AG04449 (cell line): ENCODE measurements at regions of chr19 and their contacts with region 1.

Region 1: DNA sequence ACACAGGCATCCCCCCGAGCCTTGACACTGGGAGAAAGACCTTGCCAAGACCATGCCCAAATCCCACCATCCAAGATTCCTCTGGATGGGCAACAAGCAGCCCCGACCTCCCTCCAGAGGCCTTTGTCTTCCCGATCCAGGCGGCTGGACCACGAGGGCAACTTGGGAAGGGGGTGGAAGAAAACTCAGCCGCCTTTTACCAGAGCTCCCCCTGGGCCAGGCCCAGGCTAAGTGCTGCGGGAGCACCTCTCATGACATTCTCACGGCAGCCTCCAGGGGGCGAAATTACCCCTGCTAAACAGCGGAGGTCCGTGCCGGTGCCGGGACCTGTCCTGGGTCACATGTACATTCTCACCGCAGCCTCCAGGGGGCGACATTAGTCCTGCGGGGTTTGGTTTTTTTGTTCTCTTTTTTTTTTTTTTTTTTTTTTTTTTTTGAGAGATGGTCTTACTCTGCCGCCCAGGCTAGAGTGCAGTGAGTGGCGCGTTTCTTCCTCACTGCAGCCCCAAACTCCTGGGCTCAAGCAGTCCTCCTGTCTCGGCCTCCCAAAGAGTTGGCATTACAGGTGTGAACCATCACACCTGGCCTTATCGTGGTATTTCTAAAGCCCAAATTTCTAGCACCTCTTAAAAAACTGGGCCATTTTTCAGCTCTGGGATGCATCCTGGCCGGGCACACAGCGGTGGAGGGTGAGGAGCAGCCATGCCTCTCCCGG is 2.1 kb upstream of the RSPH6A start:
- DNase-seq: peak; percentile 38
- H3K4me3 ChIP-seq: no peak overlapping the region
- CTCF ChIP-seq: peak; percentile 88

Region 2: DNA sequence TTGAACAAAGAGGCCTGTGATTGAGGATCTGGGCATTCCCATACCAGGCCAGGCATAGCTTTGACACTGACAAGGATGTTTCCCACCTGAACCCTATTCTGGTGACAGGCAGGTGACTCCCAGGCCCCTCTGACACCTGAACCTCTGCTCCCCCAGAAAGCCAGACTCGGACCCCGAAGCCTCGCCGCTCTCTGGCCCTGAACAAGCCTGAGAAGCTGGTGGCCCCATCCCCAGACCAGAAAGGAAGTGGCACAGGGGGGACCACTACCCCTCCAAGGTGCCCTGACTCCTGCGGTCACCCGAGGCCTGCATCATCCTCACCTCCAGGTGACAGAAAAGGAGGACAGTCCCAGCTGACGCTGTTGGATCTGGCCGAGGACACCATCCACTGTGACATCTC is 62.8 kb before region 1 on chr19:
- CTCF ChIA-PET with region 1: no interaction called
- POLR2A ChIA-PET with region 1: no interaction called
- DNase-seq: no peak
- H3K4me3 ChIP-seq: no peak overlapping the region
- CTCF ChIP-seq: no peak

Region 3: DNA sequence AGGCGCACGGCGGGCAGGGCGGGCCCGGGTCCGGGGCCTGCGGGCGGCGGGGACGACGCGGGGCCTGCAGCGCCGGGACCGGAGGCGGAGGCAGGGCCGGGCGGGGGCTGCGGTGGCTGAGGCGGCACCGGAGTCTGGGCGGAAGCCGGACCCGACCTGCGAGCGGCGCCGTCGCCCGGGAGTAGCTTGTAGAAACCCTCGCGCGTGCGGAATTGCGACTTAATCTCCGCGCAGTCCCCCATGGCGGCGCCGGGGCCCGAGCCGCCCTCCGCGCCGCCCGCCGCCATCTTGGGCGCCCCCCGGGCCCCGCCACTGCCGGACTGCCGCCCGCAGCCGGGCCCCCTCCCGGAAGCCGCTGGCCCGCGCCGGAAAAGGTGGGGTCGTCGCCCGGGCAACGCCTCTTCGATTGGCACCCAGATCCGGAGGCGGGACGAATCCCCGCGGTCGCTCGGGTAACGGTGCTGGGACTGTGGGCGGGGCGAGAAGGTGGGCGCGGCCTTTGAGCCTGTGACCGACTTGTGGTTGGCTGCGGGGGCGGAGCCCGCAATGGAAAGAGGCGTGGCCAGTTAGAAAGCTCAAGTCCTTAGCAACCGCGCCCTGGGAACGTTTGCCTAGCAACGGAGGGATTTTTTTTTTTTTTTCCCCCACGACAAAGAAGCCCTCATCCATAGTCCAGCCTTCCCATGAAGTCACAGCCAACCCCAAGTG is 24.5 kb before region 1 on chr19 and contains the start of gene DMWD:
- CTCF ChIA-PET with region 1: interaction called, 17 read pairs
- POLR2A ChIA-PET with region 1: no interaction called
- DNase-seq: peak; percentile 88
- H3K4me3 ChIP-seq: peak within 1 kb of the TSS; percentile 89
- CTCF ChIP-seq: no peak

Region 4: GRCh38 chr19:45798995-45799517 is 18.1 kb before region 1 on chr19:
- CTCF ChIA-PET with region 1: interaction called, 123 read pairs
- POLR2A ChIA-PET with region 1: no interaction called
- DNase-seq: peak; percentile 54
- H3K4me3 ChIP-seq: no peak overlapping the region
- CTCF ChIP-seq: peak; percentile 76

Region 5: DNA sequence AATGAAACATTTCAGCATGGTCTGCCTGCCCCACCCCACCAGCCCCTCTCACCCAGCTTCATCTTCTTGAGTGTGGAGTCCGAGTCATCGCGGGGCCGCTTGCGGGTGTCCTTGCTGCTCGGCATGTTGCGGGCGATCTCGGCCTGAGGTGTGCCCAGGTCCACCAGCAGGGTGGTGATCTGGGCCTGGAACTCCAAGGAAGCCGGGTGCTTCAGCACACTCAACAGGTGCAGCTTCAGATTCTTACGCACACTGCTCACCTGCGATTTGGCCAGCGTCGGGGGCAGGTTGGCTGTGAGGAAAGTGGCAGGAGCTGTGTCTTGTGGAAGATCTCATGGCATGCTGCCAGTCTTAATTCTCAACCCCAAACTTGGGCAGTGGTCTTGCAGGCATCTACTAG is 25.0 kb after region 1 on chr19:
- CTCF ChIA-PET with region 1: interaction called, 231 read pairs
- POLR2A ChIA-PET with region 1: no interaction called
- DNase-seq: no peak
- H3K4me3 ChIP-seq: no peak overlapping the region
- CTCF ChIP-seq: no peak

Region 6: DNA sequence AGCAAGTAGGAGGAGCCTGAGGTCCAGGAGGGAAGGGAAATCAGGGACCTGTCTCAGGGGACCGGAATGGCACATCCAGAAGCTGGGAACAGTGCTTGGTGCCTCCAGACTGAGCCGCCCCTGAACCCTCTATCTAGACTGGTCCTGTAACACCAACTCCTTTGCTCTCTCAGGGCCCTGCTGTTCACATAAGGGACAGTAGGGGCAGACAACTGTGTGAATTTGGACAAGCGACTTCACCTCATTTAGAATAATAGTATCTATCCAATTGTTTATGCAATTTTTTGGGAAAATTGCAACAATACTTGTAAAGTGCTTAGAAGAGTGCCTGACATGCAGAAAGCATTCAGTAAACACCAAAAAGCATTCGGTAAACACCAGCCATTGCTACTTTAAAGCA is 31.8 kb after region 1 on chr19:
- CTCF ChIA-PET with region 1: interaction called, 52 read pairs
- POLR2A ChIA-PET with region 1: no interaction called
- DNase-seq: no peak
- H3K4me3 ChIP-seq: no peak overlapping the region
- CTCF ChIP-seq: peak; percentile 5

Region 7: DNA sequence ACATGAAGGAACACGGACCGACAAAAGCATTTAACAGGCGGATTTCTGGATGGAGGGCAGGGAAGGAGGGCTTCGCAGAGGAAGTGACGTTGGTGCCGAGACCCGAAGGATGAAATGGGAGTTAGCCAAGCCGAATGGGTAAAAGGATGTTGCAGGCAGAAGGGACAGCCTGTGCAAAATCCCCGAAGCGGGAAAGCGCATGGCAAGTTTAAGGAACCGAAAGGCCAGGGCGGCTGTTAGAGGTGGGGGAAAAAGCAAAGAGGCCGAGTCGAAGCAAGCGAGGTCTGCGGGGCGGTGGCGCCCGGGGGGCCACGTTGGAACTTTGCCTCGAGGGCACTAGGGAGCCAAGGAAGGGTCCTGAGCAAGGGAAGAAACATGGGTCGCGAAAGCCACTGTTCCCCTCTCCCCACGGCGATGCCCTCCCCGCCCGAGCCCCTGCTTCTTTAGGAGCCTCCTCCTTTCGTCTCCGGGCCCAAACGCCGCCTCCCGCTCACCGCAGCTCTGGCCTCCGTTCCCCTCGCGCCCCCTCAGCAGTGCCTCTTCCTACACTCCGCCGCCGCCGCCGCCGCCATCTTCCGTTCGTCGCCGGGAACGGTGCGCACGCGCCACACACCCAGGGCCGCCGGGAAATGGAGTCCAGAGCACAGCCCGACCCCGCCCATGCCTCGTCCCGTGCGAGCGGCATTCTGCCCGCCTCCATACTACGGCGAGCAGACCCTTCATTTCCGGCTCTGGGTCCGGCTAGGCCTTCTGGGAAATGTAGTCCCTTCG is 45.6 kb after region 1 on chr19 and contains the start of gene SYMPK:
- CTCF ChIA-PET with region 1: interaction called, 12 read pairs
- POLR2A ChIA-PET with region 1: no interaction called
- DNase-seq: peak; percentile 76
- H3K4me3 ChIP-seq: peak within 1 kb of the TSS; percentile 99
- CTCF ChIP-seq: no peak

Region 8: GRCh38 chr19:45886427-45887199 is 69.4 kb after region 1 on chr19:
- CTCF ChIA-PET with region 1: interaction called, 95 read pairs
- POLR2A ChIA-PET with region 1: interaction called, 3 read pairs
- DNase-seq: peak; percentile 65
- H3K4me3 ChIP-seq: peak overlapping the region; percentile 78
- CTCF ChIP-seq: no peak